Calu3 (cell line): ENCODE measurements at regions of chr13 and their contacts with region 1.

Region 1: DNA sequence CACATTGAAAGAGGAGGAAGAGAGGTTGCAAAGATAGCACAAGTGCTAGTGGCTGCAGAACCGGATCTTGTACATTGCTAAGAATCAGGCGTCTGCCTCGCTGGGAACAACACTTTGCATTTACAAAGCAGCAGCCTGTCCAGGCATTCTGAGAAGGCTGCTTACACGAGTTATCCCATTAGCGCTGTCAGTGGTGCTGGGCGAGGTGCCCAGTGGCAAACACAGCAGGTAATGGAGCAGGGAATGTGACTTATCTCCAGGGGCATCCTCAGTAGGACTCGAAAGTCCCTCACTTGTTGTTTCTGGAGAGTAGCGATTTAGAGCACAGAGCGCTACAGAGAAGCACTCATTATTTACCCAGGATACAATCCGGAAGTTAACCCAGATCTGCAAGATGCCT is 209.6 kb downstream of the OLFM4 start:
- DNase-seq: no peak
- H3K4me3 Mint-ChIP-seq: no peak overlapping the region
- H3K27ac Mint-ChIP-seq: no peak overlapping the region
- H3K4me1 Mint-ChIP-seq: no peaks in the 10 kb centered on the region
- H3K27me3 Mint-ChIP-seq: peaks cover 28% of the 10 kb centered on the region
- CTCF ChIP-seq: no peak

Region 2: DNA sequence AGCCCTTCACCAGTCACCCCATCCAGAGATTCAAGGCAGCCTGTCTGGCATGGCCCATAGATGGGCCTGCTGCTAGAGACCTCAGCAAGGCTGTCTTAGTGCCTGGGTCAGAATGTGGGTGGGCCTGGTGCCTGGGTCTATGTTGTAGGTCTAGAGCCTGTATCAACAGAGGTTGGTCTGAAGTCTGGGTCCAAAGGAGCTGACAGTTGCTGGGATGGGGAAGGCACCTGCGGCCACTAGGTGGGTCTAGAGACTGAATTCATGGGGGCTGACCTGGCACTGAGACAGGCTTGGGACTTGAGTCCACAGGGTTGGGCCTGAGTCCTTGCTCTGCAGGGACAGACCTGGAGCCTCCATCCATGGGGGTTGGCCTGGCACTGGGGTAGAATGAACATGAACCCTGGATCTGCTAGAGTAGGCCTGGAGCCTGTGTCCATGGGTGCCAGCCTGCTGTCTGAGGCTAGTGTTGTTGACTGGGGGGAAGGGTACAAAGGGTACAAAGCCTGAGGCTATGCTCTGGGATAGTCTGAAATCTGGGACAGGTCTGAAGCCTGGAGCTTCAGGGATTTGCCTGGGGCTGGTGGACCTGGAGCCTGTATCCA is 307.2 kb after region 1 on chr13:
- CTCF ChIA-PET with region 1: no interaction called
- intact Hi-C with region 1: no loop called
- DNase-seq: no peak
- H3K4me3 Mint-ChIP-seq: no peak overlapping the region
- H3K27ac Mint-ChIP-seq: no peak overlapping the region
- H3K4me1 Mint-ChIP-seq: no peaks in the 10 kb centered on the region
- H3K27me3 Mint-ChIP-seq: no peaks in the 10 kb centered on the region
- CTCF ChIP-seq: no peak

Region 3: DNA sequence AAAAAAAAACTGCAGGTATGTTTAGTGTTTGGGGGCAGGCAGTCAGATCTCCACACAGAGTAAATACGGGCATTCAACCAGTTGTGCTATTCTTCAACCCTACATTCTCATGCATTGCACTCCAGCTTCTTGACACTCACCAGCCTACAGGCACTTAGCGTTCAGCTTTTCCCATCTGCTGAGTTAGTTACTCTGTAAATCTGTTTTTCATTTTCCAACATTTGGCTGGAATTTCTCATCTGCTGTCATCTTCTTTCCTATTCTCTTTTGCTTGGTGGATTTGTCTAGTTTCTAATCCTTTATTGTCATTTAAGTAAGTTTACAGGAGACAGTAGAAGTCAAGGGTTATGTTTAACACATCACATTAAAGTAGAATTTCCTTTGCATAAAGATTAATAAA is 1109.3 kb after region 1 on chr13:
- CTCF ChIA-PET with region 1: interaction called, 10 read pairs
- intact Hi-C with region 1: no loop called
- DNase-seq: no peak
- H3K4me3 Mint-ChIP-seq: no peak overlapping the region
- H3K27ac Mint-ChIP-seq: no peak overlapping the region
- H3K4me1 Mint-ChIP-seq: no peaks in the 10 kb centered on the region
- H3K27me3 Mint-ChIP-seq: no peaks in the 10 kb centered on the region
- CTCF ChIP-seq: no peak